Common myeloid progenitor, CD34-positive (primary cell): ENCODE measurements at regions of chr5 and their contacts with region 1.

Region 1: GRCh38 chr5:42908509-42909488 is 97.1 kb upstream of the SELENOP start:
- DNase-seq: peak; percentile 87 to 91 (median 90)
- H3K4me3 ChIP-seq: peak overlapping the region; percentile 1 to 88 (median 72)
- H3K27ac ChIP-seq: no peak overlapping the region
- H3K4me1 ChIP-seq: peaks cover 0 to 7% (median 6%) of the 10 kb centered on the region in 4 experiments
- H3K27me3 ChIP-seq: peaks cover 0 to 12% (median 5%) of the 10 kb centered on the region in 5 experiments

Region 2: GRCh38 chr5:42927730-42928129 is 18.9 kb after region 1 on chr5:
- CTCF ChIA-PET with region 1: interaction called, 10 read pairs
- POLR2A ChIA-PET with region 1: no interaction called
- DNase-seq: no peak
- H3K4me3 ChIP-seq: no peak overlapping the region
- H3K27ac ChIP-seq: no peak overlapping the region
- H3K4me1 ChIP-seq: no peaks in the 10 kb centered on the region
- H3K27me3 ChIP-seq: peaks cover 0 to 4% (median 0%) of the 10 kb centered on the region in 5 experiments

Region 3: DNA sequence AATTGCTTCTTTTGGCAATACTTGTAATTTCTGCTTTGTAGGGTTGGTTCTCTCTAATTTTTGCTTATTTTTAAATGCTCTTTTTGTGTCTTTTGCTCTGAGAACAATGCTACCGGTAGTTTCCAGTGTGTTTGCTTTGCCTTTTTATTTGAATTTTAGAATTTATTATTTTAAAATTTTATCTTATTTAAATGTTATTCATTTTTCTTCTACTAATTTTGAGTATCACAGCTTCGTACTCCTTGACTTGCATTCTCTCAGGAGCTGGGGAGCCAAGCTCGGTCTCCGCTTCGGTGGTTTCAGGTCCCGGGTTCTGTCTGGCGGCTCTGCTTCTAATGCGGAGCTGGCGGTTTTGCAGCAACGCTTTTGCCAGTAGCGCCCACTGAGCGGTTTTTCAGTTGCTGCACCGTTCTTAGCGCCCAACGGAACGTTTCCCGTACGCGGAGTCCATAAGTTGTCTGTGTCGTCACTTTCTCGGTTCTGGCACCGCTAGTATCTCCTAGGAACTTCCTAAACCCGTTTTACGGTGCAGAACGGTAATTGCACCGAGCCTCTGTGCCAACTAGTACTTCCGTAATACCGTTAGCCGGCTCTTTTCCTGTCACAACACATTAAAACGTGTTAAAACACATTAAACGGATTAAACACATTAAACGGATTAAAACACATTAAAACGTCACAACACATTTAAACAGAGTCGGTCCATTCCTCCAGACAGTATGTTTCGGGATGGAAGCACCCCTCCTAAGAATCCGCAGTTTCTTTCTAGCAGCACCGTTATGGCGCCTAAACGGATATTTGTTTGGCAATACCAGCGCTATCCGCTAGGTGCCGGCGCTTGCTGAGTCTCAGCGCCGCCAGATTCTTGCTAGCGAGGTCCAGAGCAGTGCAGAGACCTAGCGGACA is 85.7 kb after region 1 on chr5:
- CTCF ChIA-PET with region 1: interaction called, 15 read pairs
- POLR2A ChIA-PET with region 1: no interaction called
- DNase-seq: peak; percentile 90 to 96 (median 95)
- H3K4me3 ChIP-seq: peak overlapping the region; percentile 67 to 98 (median 91)
- H3K27ac ChIP-seq: peak overlapping the region; percentile 97 to 98
- H3K4me1 ChIP-seq: peaks cover 12 to 46% (median 35%) of the 10 kb centered on the region in 4 experiments
- H3K27me3 ChIP-seq: no peaks in the 10 kb centered on the region

Region 4: GRCh38 chr5:43040287-43041098 is 131.7 kb after region 1 on chr5 and contains the start of gene ANXA2R:
- CTCF ChIA-PET with region 1: interaction called, 22 read pairs
- POLR2A ChIA-PET with region 1: interaction called, 5 read pairs
- DNase-seq: peak; percentile 96 to 98 (median 98)
- H3K4me3 ChIP-seq: peak within 1 kb of the TSS; percentile 46 to 95 (median 80)
- H3K27ac ChIP-seq: peak within 1 kb of the TSS; percentile 99 to 100
- H3K4me1 ChIP-seq: peaks cover 9 to 72% (median 44%) of the 10 kb centered on the region in 4 experiments
- H3K27me3 ChIP-seq: no peaks in the 10 kb centered on the region

Region 5: DNA sequence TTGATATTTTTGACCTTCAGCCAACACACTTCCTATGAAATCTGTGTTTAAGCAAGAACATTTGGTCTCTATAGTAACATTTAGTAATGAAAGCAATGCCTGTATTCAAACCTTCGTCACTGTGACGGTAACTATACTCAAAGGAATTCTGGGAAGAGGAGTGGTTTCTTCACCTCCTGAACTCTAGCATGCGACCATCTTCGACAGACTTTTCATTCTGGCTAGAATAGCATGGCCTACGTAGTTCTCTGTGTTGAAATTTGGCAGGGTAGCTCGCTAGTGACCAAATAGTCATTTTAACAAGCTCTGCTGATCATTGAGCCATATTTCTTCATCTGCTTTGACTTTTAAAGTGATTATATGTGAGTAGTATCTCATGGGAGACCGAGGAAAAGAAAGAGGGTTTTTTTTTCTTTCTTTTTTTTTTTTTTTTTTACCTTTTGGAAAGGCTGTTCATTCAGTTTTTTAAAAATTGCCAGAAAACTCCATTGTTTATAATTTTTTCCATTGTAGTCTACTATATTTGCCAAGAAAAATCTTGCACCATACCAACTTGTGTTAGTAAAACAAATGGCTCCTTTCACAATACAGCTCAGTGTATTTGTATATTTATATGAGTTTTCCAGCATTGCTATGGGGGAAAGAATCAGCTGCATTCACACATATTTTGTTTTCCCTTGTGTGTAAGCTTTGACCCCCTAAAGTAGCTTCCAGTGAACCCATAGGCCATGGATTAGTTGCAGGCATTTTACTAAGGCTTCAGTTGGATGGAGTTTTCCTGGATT is 861.0 kb after region 1 on chr5:
- CTCF ChIA-PET with region 1: no interaction called
- POLR2A ChIA-PET with region 1: no interaction called
- DNase-seq: no peak
- H3K4me3 ChIP-seq: no peak overlapping the region
- H3K27ac ChIP-seq: no peak overlapping the region
- H3K4me1 ChIP-seq: peaks cover 0 to 13% (median 5%) of the 10 kb centered on the region in 4 experiments
- H3K27me3 ChIP-seq: no peaks in the 10 kb centered on the region